ENCODE measurements at regions of chr7 and their contacts with region 1.

Region 1: GRCh38 chr7:134432296-134433152 is 26.4 kb downstream of the AKR1B1 start:
- DNase-seq: peak; percentile 91
- ATAC-seq: peak; percentile 95
- H3K4me3 ChIP-seq: peak overlapping the region; percentile 32 to 48
- H3K27ac ChIP-seq: peak overlapping the region; percentile 44
- H3K4me1 ChIP-seq: peaks cover 6 to 16% of the 10 kb centered on the region in 2 experiments; a peak in 3 of 4 replicates
- H3K27me3 ChIP-seq: no peaks in the 10 kb centered on the region
- CTCF ChIP-seq: peak; percentile 66 to 98 (median 80)
- POLR2A ChIP-seq: peak; percentile 31
- RAD21 ChIP-seq: peak; percentile 98

Region 2: GRCh38 chr7:134388336-134389019 is 44.0 kb before region 1 on chr7:
- CTCF ChIA-PET with region 1: no interaction called
- POLR2A ChIA-PET with region 1: no interaction called
- RAD21 ChIA-PET with region 1: no interaction called
- intact Hi-C with region 1: no loop called
- DNase-seq: no peak
- ATAC-seq: no peak
- H3K4me3 ChIP-seq: no peak overlapping the region
- H3K27ac ChIP-seq: no peak overlapping the region
- H3K4me1 ChIP-seq: no peaks in the 10 kb centered on the region
- H3K27me3 ChIP-seq: no peaks in the 10 kb centered on the region
- CTCF ChIP-seq: no peak
- POLR2A ChIP-seq: no peak
- RAD21 ChIP-seq: no peak

Region 3: GRCh38 chr7:134403677-134404076 is 28.8 kb before region 1 on chr7:
- CTCF ChIA-PET with region 1: no interaction called
- POLR2A ChIA-PET with region 1: no interaction called
- RAD21 ChIA-PET with region 1: no interaction called
- intact Hi-C with region 1: no loop called
- DNase-seq: no peak
- ATAC-seq: peak; percentile 22; the same call in 1 of the 2 replicates
- H3K4me3 ChIP-seq: no peak overlapping the region
- H3K27ac ChIP-seq: no peak overlapping the region
- H3K4me1 ChIP-seq: no peaks in the 10 kb centered on the region
- H3K27me3 ChIP-seq: no peaks in the 10 kb centered on the region
- CTCF ChIP-seq: no peak; a peak in 1 of 6 replicates
- POLR2A ChIP-seq: no peak
- RAD21 ChIP-seq: no peak

Region 4: GRCh38 chr7:134480736-134481135 is 48.2 kb after region 1 on chr7:
- CTCF ChIA-PET with region 1: interaction called, 50 read pairs
- POLR2A ChIA-PET with region 1: interaction called, 4 read pairs
- RAD21 ChIA-PET with region 1: interaction called, 3 to 6 read pairs
- intact Hi-C with region 1: no loop called
- DNase-seq: peak; percentile 36
- ATAC-seq: peak; percentile 97
- H3K4me3 ChIP-seq: peak overlapping the region in 1 of 2 experiments; percentile 31; a peak in 2 of 4 replicates
- H3K27ac ChIP-seq: no peak overlapping the region
- H3K4me1 ChIP-seq: peaks cover 13 to 15% of the 10 kb centered on the region in 2 experiments
- H3K27me3 ChIP-seq: no peaks in the 10 kb centered on the region
- CTCF ChIP-seq: no peak
- POLR2A ChIP-seq: no peak
- RAD21 ChIP-seq: no peak

Region 5: GRCh38 chr7:134547397-134548054 is 115.0 kb after region 1 on chr7:
- CTCF ChIA-PET with region 1: interaction called, 54 read pairs
- POLR2A ChIA-PET with region 1: interaction called, 5 read pairs
- RAD21 ChIA-PET with region 1: interaction called, 3 to 13 read pairs
- intact Hi-C with region 1: loop called (anchors 1 kb)
- DNase-seq: peak; percentile 56
- ATAC-seq: peak; percentile 95
- H3K4me3 ChIP-seq: peak overlapping the region; percentile 19 to 41
- H3K27ac ChIP-seq: no peak overlapping the region
- H3K4me1 ChIP-seq: peaks cover 8 to 15% of the 10 kb centered on the region in 2 experiments; a peak in 3 of 4 replicates
- H3K27me3 ChIP-seq: 0 out of 2 replicates have a peak, but pooled peaks cover 5% of the 10 kb centered on the region
- CTCF ChIP-seq: peak; percentile 76 to 94 (median 82)
- POLR2A ChIP-seq: no peak
- RAD21 ChIP-seq: peak; percentile 67

Region 6: GRCh38 chr7:134632937-134633540 is 200.5 kb after region 1 on chr7:
- CTCF ChIA-PET with region 1: interaction called, 12 read pairs
- POLR2A ChIA-PET with region 1: no interaction called
- RAD21 ChIA-PET with region 1: no interaction called
- intact Hi-C with region 1: no loop called
- DNase-seq: peak; percentile 51
- ATAC-seq: peak; percentile 91
- H3K4me3 ChIP-seq: no peak overlapping the region
- H3K27ac ChIP-seq: no peak overlapping the region
- H3K4me1 ChIP-seq: no peaks in the 10 kb centered on the region
- H3K27me3 ChIP-seq: 0 out of 2 replicates have a peak, but pooled peaks cover 4% of the 10 kb centered on the region
- CTCF ChIP-seq: peak; percentile 63 to 76 (median 75); a peak in 5 of 6 replicates
- POLR2A ChIP-seq: no peak
- RAD21 ChIP-seq: peak; percentile 86

Region 7: GRCh38 chr7:134834689-134835462 is 402.4 kb after region 1 on chr7:
- CTCF ChIA-PET with region 1: no interaction called
- POLR2A ChIA-PET with region 1: no interaction called
- RAD21 ChIA-PET with region 1: no interaction called
- intact Hi-C with region 1: no loop called
- DNase-seq: no peak
- ATAC-seq: no peak
- H3K4me3 ChIP-seq: no peak overlapping the region
- H3K27ac ChIP-seq: no peak overlapping the region
- H3K4me1 ChIP-seq: no peaks in the 10 kb centered on the region
- H3K27me3 ChIP-seq: no peaks in the 10 kb centered on the region
- CTCF ChIP-seq: no peak
- POLR2A ChIP-seq: no peak
- RAD21 ChIP-seq: no peak